H1 (cell line): ENCODE measurements at regions of chr2 and their contacts with region 1.

Region 1: DNA sequence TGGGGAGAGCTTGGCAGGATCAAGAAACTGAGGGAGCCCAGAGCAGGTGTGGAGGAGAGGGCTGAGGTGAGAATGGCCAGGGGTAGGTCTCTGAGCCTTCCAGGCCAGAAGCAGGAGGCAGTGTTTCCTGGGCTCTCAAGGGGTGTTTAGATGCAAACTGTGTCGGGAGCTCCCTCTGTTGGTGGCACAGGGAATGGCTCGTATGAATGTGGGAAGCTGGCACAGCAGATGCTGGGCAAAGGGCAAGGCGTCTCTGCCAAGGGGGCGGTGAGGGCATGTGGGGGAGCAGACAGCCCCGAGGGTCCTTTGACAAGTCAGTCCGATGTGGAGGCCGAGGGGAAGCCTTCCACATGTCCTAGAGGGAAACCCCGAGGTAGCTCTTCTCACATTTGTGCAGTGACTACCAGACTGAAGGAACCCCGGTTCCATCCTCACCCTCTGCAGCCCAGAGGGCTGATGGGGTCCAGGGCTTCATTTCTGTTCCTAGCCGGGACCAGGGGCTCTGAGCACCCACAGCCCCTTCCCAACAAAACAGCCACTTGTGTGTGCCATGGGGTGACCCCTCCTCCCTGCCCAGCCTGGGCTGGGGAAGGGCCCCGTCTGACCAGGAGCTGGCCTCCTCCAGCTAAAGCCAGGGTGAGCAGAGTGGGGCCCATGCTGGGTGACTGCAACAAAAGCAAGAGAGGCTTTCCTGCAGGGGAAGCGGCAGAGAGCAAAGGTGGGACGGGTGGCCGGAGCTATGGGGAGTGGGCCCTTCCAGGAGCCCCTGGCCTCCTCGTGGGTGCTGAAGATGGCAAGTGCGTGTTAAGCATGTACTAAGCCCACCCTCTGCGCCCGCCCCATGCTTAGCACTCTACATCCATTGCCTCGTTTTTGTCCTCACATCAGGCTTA is 103.4 kb downstream of the SEPTIN10 start:
- DNase-seq: peak; percentile 21 to 88
- H3K4me3 ChIP-seq: no peak overlapping the region
- H3K27ac ChIP-seq: no peak overlapping the region
- H3K4me1 ChIP-seq: no peaks in the 10 kb centered on the region
- H3K27me3 ChIP-seq: no peaks in the 10 kb centered on the region
- CTCF ChIP-seq: peak; percentile 94 to 96 (median 96)
- EP300 ChIP-seq: no peak
- POLR2A ChIP-seq: no peak
- RAD21 ChIP-seq: peak; percentile 93 to 94

Region 2: GRCh38 chr2:109216327-109216726 is 294.1 kb before region 1 on chr2:
- CTCF ChIA-PET with region 1: interaction called, 10 read pairs
- POLR2A ChIA-PET with region 1: no interaction called
- DNase-seq: no peak
- H3K4me3 ChIP-seq: no peak overlapping the region
- H3K27ac ChIP-seq: no peak overlapping the region
- H3K4me1 ChIP-seq: no peaks in the 10 kb centered on the region; a peak in 1 of 7 replicates
- H3K27me3 ChIP-seq: no peaks in the 10 kb centered on the region; a peak in 1 of 7 replicates
- CTCF ChIP-seq: peak in 2 of 3 experiments; percentile 21 to 25; a peak in 3 of 4 replicates
- EP300 ChIP-seq: no peak
- POLR2A ChIP-seq: no peak
- RAD21 ChIP-seq: peak; percentile 36 to 55

Region 3: GRCh38 chr2:109312892-109313291 is 197.5 kb before region 1 on chr2:
- CTCF ChIA-PET with region 1: interaction called, 11 read pairs
- POLR2A ChIA-PET with region 1: no interaction called
- DNase-seq: no peak
- H3K4me3 ChIP-seq: no peak overlapping the region
- H3K27ac ChIP-seq: no peak overlapping the region
- H3K4me1 ChIP-seq: no peaks in the 10 kb centered on the region
- H3K27me3 ChIP-seq: no peaks in the 10 kb centered on the region
- CTCF ChIP-seq: no peak
- EP300 ChIP-seq: no peak
- POLR2A ChIP-seq: no peak
- RAD21 ChIP-seq: peak; percentile 45 to 48

Region 4: DNA sequence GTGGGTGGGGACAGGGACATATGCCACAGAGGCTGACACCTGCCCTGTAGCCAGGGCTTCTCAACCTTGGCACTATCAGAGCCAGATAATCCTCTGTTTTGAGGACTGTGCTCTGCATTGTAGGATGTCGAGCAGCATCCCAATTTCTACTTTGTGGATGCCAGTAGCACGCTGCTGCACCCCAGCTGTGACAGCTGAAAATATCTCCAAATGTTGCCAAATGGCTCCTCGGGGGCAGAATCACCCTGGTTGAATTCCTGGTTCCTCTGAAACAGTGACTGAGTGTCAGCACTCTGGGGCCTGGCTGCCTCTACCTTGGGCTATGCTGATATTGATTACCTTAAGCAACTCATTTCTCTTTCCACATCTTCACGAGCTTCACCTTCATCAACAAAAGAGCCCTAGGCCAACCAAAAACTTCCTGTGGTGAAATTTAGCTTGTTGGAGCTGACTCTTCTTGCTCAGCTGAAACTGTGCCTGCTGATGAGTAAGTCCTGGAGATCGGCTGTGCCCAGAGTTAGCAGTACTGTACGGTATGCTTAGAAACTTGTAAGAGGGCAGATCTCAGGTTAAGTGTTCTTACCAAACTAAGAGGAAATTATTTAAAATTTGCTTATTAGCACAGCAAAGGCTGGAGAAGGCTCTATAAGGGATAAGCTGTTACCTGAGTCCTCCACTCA is 34.7 kb before region 1 on chr2:
- CTCF ChIA-PET with region 1: interaction called, 12 read pairs
- POLR2A ChIA-PET with region 1: no interaction called
- DNase-seq: no peak
- H3K4me3 ChIP-seq: no peak overlapping the region
- H3K27ac ChIP-seq: no peak overlapping the region
- H3K4me1 ChIP-seq: no peaks in the 10 kb centered on the region
- H3K27me3 ChIP-seq: no peaks in the 10 kb centered on the region
- CTCF ChIP-seq: no peak
- EP300 ChIP-seq: no peak
- POLR2A ChIP-seq: no peak
- RAD21 ChIP-seq: no peak

Region 5: GRCh38 chr2:109529532-109530449 is 19.4 kb after region 1 on chr2:
- CTCF ChIA-PET with region 1: interaction called, 13 read pairs
- POLR2A ChIA-PET with region 1: no interaction called
- DNase-seq: no peak
- H3K4me3 ChIP-seq: no peak overlapping the region
- H3K27ac ChIP-seq: no peak overlapping the region
- H3K4me1 ChIP-seq: no peaks in the 10 kb centered on the region
- H3K27me3 ChIP-seq: no peaks in the 10 kb centered on the region
- CTCF ChIP-seq: no peak
- EP300 ChIP-seq: no peak
- POLR2A ChIP-seq: no peak
- RAD21 ChIP-seq: no peak